ENCODE measurements at regions of chr5 and their contacts with region 1.

Region 1: GRCh38 chr5:175478384-175479124 is at the start of gene SFXN1:
- DNase-seq: peak; percentile 84
- ATAC-seq: peak; percentile 75
- H3K4me3 Mint-ChIP-seq: peak within 1 kb of the TSS; percentile 88
- H3K27ac Mint-ChIP-seq: peak within 1 kb of the TSS; percentile 98
- H3K4me1 Mint-ChIP-seq: peaks cover 48% of the 10 kb centered on the region
- H3K27me3 Mint-ChIP-seq: no peaks in the 10 kb centered on the region
- CTCF ChIP-seq: no peak
- total RNA-seq, gene SFXN1: 476 to 491 TPM

Region 2: GRCh38 chr5:175464074-175464941 is 14.2 kb before region 1 on chr5:
- CTCF ChIA-PET with region 1: interaction called, 87 read pairs
- POLR2A ChIA-PET with region 1: interaction called, 5 read pairs
- intact Hi-C with region 1: no loop called
- DNase-seq: peak; percentile 85
- ATAC-seq: peak; percentile 98
- H3K4me3 Mint-ChIP-seq: no peak overlapping the region
- H3K27ac Mint-ChIP-seq: peak overlapping the region; percentile 53
- H3K4me1 Mint-ChIP-seq: peaks cover 24% of the 10 kb centered on the region
- H3K27me3 Mint-ChIP-seq: no peaks in the 10 kb centered on the region
- CTCF ChIP-seq: peak; percentile 84

Region 3: DNA sequence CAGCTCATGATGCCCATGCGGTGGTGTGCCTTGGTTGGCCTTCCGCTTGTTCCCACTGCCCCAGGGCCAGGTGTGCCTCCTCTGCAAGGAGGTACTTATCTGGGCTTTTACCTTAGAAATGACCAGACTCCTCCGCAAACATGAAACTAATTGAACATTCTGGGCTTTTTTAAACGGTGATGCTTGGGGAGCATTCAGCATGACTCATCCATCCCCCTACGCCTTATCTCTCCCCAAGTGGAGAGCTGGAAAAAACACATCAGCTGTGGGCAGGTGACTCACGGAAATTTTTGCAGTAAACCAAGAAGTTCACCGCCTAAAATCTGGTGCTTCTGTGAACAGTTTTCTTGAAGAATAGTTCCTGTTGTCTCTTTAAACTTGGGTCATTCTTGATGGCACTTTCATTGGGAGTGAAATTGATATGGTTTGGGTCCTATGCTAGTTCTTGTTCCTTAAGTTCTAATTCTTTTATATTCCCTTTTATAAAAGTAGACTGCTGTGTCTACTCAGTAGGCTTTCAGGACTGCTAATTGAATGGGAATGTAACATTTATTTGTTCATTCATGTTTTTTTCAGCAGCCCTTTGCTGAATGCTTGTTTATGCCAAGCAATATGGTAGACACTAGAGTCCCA is 39.4 kb after region 1 on chr5:
- CTCF ChIA-PET with region 1: interaction called, 6 read pairs
- POLR2A ChIA-PET with region 1: interaction called, 63 read pairs
- intact Hi-C with region 1: loop called (anchors 2 kb)
- DNase-seq: peak; percentile 93
- ATAC-seq: peak; percentile 49
- H3K4me3 Mint-ChIP-seq: peak overlapping the region; percentile 59
- H3K27ac Mint-ChIP-seq: peak overlapping the region; percentile 99
- H3K4me1 Mint-ChIP-seq: peaks cover 87% of the 10 kb centered on the region
- H3K27me3 Mint-ChIP-seq: no peaks in the 10 kb centered on the region
- CTCF ChIP-seq: no peak

Region 4: GRCh38 chr5:175526691-175527090 is 48.1 kb after region 1 on chr5:
- CTCF ChIA-PET with region 1: interaction called, 6 read pairs
- POLR2A ChIA-PET with region 1: interaction called, 63 read pairs
- intact Hi-C with region 1: no loop called
- DNase-seq: no peak
- ATAC-seq: no peak
- H3K4me3 Mint-ChIP-seq: peak overlapping the region; percentile 58
- H3K27ac Mint-ChIP-seq: peak overlapping the region; percentile 82
- H3K4me1 Mint-ChIP-seq: peaks cover 61% of the 10 kb centered on the region
- H3K27me3 Mint-ChIP-seq: no peaks in the 10 kb centered on the region
- CTCF ChIP-seq: no peak

Region 5: DNA sequence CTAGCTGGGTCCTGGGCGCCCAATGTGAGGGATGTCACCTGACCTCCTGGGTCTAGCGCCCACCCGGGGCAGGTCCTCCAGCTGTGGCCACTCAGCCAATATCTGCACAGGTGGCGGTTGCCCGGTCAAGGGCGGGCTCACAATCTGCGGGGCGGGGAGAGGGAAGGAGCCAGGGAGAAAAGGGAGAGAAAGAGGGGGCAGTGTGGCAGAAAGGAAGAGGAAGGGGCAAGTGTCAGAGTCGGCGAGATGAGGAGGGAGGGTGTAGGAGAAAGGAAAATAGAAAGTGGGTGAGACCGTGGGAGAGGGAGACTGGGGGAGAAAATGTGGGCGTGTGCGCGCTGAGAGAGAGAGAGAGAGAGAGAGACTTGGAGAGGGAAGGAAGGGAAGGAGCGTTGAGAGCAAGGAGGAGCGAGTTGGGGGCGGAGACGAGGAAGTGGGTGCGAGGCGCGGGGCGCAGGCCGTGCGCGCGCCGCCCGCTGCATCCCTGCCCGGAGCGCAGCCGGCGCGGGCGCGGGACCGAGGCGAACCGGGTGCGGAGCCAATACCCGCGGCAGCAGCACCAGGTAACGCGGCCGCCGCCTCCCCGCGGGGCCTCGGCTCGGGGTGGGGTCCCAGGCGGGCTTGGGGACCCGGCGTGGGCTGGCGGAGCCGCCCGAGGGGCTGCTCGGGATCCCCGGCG is 179.2 kb after region 1 on chr5 and contains the start of gene HRH2:
- CTCF ChIA-PET with region 1: no interaction called
- POLR2A ChIA-PET with region 1: interaction called, 4 read pairs
- intact Hi-C with region 1: loop called (anchors 5 kb)
- DNase-seq: peak; percentile 75
- ATAC-seq: peak; percentile 47
- H3K4me3 Mint-ChIP-seq: peak within 1 kb of the TSS; percentile 84
- H3K27ac Mint-ChIP-seq: peak within 1 kb of the TSS; percentile 84
- H3K4me1 Mint-ChIP-seq: peaks cover 72% of the 10 kb centered on the region
- H3K27me3 Mint-ChIP-seq: no peaks in the 10 kb centered on the region
- CTCF ChIP-seq: no peak
- total RNA-seq, gene HRH2: 23.2 to 24.5 TPM

Measured in activated CD8-positive, alpha-beta T cell treated with anti-CD3 and anti-CD28 coated beads for 36 hours (primary cell).